ENCODE measurements at regions of chr12 and their contacts with region 1.

Region 1: GRCh38 chr12:1117970-1118563 is 127.0 kb downstream of the ERC1 start:
- DNase-seq: peak; percentile 31
- CTCF ChIP-seq: peak; percentile 84

Region 2: GRCh38 chr12:1056390-1056789 is 61.7 kb before region 1 on chr12:
- CTCF ChIA-PET with region 1: no interaction called
- POLR2A ChIA-PET with region 1: no interaction called
- DNase-seq: no peak
- CTCF ChIP-seq: no peak

Region 3: GRCh38 chr12:1130164-1130563 is 12.1 kb after region 1 on chr12:
- CTCF ChIA-PET with region 1: interaction called, 47 read pairs
- POLR2A ChIA-PET with region 1: no interaction called
- DNase-seq: no peak
- CTCF ChIP-seq: no peak

Region 4: DNA sequence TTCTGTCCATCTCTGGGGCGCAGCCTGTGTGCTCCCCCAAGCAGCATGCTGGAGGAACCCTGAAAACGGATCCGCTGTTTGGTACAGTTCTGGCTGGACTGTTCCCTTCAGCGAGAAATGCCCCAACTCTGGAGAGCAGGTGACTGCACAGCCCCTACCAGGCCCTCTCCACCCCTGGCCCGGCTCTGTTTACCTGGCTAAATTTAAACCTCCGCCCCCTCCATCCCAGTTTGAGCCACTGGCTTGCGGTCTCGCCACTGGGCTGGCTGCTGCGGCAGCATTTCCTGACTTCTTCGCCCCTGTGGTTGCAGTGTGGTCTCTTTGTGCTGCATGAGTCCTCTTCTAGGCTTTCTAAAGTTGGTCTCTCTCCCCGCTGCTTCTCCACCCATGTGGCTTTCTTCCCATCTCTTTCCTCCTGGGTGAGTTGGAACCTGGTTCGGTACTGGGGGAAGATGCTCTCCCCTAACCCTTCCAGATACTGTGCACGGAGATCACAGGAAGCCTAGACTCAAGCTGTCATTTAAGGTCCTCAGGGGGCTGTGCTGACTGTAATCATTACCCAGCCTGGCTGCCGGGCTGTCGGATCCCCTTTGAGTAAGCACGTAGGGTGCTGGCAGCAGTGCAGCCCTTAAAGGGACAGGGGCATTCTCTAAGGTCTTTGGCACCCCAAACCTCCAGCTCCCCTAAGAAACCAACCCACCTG is 415.7 kb after region 1 on chr12:
- CTCF ChIA-PET with region 1: interaction called, 18 read pairs
- POLR2A ChIA-PET with region 1: no interaction called
- DNase-seq: peak; percentile 69
- CTCF ChIP-seq: no peak

Region 5: DNA sequence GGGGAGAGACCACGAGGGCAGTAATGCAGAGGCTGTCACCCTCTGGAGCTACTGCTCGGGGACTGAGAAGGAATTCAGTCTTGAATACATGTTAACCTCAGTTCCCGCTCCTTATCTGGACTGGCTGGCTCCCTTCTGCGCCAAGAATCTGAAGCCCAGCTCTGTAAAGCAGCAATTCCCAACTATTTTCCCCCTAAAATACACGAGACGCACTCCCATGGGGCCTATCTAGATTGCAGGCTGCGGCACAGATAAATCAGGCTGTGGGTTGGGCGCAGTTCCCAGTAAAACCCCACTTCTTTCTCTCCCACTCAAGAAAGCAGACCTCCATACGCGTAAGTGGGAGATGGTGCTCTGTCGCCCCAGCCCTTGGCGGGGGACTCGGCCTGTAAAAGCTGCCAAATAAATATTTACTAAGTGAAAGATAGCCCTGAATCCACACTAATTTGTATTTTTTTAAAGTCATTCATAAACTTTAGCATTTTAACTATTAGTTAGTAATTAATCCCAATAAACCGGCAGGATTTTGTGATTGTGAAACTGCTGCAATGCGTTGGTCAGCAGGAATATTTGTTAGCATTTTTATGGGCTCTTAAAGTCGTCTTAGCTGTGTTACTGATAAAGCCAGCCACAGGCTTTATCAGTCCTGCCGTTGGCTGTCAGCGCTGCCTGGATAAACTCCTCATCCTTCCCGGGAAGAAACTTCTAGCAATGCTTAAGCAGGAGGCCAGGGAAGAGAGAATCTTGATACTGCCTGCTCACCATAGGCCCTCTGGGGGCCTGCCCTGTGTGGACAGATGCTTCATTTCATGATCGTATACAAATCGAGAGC is 458.6 kb after region 1 on chr12:
- CTCF ChIA-PET with region 1: interaction called, 129 read pairs
- POLR2A ChIA-PET with region 1: no interaction called
- DNase-seq: no peak
- CTCF ChIP-seq: no peak

Region 6: DNA sequence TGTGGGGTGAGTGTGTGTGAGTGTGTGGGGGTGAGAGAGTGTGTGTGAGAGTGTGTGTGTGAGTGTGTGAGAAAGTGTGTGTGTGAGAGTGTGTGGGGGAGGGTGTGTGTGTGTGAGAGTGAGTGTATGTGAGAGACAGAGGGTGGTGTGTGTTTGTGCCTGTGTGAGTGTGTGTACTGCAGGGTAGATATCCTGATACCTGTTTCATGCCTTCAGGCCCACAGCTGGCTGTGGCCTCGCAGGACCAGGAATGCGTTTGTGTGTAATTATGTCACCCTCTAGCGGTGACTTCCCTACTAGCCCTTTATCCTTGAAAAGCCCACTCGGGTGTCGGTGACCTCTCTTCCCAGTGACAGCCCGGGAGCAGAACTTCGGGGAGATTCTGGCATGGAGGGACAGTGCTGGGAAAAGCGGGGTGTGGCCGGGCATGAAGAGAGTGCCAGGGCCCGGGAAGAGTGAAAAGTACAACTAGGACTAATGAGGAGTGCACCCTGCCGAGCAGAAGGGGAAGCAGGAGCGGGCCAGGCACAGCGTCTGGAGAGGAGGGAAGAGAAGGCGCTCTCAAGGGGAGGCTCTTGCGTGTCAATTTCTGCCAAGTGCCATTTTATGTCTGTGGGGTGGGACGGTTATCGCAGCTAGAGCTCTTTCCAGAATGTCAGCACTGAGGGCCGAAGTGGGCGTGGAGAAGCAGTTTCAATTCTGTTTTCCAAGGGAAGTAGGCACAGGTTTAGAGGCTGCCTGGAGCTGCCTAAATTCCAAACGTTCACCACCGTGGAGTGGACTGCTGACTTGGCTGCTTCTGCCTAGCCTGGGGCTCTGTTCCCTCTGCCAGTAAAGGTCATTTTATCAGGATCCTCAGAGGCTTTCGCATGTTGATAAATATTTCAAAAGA is 487.3 kb after region 1 on chr12:
- CTCF ChIA-PET with region 1: interaction called, 37 read pairs
- POLR2A ChIA-PET with region 1: no interaction called
- DNase-seq: peak; percentile 63
- CTCF ChIP-seq: peak; percentile 65

Region 7: GRCh38 chr12:1795785-1796514 is 677.9 kb after region 1 on chr12:
- CTCF ChIA-PET with region 1: interaction called, 25 read pairs
- POLR2A ChIA-PET with region 1: no interaction called
- DNase-seq: peak; percentile 95
- CTCF ChIP-seq: peak; percentile 96

Measured in GM10248 (cell line).